GM18951 (cell line): ENCODE measurements at regions of chr20 and their contacts with region 1.

Region 1: DNA sequence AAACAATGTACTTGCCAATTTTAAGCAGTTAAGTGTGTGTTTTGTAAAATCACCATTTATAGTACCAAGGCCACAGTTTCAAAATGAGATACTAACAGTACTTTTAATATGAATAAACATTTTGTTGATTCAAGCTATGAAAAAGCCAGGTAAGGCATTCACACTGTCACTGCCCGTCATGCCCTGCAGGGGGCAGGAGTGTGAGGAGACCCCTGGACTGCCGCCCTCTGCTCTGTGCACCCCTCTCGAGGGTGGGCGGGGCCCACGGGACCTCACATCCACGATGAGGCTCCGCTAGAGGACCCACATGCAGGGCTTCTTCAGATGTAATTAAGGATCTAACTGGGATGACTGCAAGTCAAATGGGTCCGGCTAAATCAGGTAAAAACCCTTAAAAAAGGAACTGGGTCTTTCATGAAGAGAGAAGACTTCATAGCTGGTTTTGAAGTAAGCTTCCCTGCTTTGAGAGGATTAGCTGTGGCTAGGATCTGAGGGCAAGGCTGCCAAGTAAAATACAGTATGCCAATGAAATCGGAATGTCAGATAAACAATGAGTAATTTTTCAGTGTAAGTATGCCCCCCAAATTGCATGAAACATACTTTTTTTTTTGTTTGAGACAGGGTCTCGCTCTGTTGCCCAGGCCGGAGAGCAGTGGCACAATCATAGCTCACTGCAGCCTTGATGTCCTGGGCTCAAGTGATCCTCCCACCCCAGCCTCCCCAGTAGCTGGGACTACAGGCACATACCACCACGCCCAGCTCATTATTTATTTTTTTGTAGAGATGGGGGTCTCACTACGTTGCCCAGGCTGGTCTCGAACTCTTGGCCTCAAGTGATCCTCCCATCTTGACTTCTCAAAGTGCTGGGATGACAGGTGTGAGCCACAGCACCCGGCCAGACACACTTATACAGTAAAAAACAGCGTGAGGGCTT is 18.7 kb downstream of the DIDO1 start:
- POLR2A ChIP-seq: no peak

Region 2: DNA sequence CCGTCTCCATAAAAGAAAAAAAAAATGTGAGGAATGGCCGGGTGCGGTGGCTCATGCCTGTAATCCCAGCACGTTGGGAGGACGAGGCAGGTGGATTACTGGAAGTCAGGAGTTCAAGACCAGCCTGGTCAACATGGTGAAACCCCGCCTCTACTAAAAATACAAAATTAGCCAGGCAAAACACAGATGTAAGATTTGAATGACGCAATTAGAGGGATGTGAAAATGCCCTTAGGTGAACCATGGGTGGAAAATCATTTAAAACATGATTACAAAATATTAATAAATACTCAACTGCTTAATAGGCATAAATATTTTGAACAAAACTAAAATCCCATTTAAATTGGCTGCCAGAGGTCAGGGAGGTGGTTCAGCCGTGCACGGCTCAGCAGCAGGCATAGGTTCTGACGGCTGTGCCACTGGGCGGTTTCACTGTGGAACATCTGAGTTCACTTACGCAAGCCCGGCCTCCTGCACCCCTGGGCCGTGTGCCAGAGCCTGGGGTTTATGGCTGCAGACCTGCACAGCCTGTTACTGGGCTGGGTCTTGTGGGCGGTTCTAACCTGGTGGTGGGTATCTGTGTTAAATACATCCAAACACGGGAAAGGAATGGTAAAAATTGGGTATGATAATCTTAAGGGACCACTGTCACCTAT is 69.7 kb before region 1 on chr20:
- in situ Hi-C with region 1: no loop called
- POLR2A ChIP-seq: no peak

Region 3: GRCh38 chr20:62874745-62875344 is 32.8 kb before region 1 on chr20:
- in situ Hi-C with region 1: loop called (anchors 5 kb)
- POLR2A ChIP-seq: no peak